ENCODE measurements at regions of chr10 and their contacts with region 1.

Region 1: GRCh38 chr10:76558586-76558985 is 1079.0 kb downstream of the KCNMA1 start:
- DNase-seq: peak; percentile 75
- H3K4me3 ChIP-seq: no peak overlapping the region
- H3K27ac ChIP-seq: no peak overlapping the region
- H3K4me1 ChIP-seq: peaks cover 23% of the 10 kb centered on the region
- H3K27me3 ChIP-seq: peaks cover 10% of the 10 kb centered on the region; the same call in 1 of the 2 replicates

Region 2: GRCh38 chr10:77111611-77112550 is 553.3 kb after region 1 on chr10:
- in situ Hi-C with region 1: loop called (anchors 25 kb)
- DNase-seq: peak; percentile 83
- H3K4me3 ChIP-seq: peak overlapping the region; percentile 16; the same call in 1 of the 2 replicates
- H3K27ac ChIP-seq: peak overlapping the region; percentile 52
- H3K4me1 ChIP-seq: peaks cover 13% of the 10 kb centered on the region
- H3K27me3 ChIP-seq: no peaks in the 10 kb centered on the region

Measured in GM23248 (cell line).